GM12878 (cell line): ENCODE measurements at regions of chr11 and their contacts with region 1.

Region 1: DNA sequence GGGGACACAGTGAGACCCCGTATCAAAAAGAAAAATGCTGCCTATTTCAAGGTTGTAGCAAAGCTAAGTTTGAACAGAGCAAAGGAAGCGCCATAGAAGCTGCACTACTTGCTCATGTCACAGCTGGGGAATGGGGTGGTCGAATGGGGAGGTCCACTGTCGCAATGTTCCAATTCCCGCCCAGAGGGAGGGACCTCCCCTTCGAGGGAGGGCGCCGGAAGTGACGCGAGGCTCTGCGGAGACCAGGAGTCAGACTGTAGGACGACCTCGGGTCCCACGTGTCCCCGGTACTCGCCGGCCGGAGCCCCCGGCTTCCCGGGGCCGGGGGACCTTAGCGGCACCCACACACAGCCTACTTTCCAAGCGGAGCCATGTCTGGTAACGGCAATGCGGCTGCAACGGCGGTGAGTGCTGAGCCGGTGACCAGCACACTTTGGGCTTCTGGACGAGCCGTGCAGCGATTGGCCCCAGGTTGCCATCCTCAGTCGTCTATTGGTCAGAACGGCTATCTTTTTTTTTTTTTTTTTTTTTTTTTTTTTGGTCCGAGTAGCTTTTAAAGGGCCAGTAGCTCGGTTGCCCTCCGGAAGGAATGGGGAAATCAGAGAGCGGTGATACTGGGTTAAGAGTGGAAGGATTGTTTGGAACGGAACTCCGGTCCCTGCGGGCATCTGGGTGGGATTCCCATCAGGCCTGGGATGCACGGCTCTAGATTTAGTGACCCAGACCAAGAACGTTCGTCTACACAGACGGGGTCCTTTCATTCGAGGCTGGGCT is at the start of gene HMBS:
- DNase-seq: peak; percentile 79
- ATAC-seq: peak; percentile 95
- H3K4me3 ChIP-seq: peak within 1 kb of the TSS; percentile 97
- H3K27ac ChIP-seq: peak within 1 kb of the TSS; percentile 94
- H3K4me1 ChIP-seq: peaks cover 10% of the 10 kb centered on the region
- H3K27me3 ChIP-seq: no peaks in the 10 kb centered on the region
- CTCF ChIP-seq: no peak
- EP300 ChIP-seq: peak in 1 of 2 experiments; percentile 12; a peak in 1 of 4 replicates
- POLR2A ChIP-seq: peak; percentile 89
- RAD21 ChIP-seq: no peak
- polyA plus RNA-seq, gene HMBS: 17.7 to 27.6 TPM

Region 2: DNA sequence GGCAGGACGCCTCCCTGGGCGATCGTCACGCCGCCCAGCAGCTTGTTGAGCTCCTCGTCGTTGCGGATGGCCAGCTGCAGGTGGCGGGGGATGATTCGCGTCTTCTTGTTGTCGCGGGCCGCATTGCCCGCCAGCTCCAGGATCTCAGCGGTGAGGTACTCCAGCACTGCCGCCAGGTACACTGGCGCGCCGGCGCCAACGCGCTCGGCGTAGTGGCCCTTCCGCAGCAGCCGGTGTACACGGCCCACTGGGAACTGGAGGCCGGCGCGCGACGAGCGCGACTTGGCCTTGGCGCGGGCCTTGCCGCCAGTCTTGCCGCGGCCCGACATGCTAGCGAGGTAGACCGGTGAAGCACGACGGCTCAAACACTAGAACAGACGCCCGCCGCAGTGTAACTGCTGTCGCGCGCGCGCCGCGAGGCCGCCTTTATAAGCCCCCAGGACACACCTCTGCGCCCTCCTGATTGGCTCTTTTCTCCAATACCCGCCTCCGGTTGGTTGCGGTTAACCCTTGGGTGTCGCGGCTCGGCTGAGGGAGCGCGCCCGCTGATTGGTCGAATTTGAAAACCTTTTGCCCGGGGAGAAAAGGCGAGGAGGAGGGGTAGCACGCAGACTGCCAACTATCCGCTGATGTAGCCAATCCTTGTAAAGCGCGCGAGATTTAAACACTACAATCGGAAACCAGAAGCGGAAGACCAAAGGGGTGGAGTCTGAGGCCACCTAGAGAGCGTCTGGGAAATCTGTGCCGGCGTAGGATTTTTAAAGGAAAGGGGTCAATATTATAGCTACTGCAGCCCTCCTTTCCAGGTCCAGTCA is 10.4 kb after region 1 on chr11:
- CTCF ChIA-PET with region 1: interaction called, 11 read pairs
- POLR2A ChIA-PET with region 1: interaction called, 69 read pairs
- RAD21 ChIA-PET with region 1: interaction called, 5 read pairs
- SMC1A ChIA-PET with region 1: interaction called, 3 read pairs
- in situ Hi-C with region 1: no loop called
- intact Hi-C with region 1: no loop called
- DNase-seq: peak; percentile 99
- ATAC-seq: peak; percentile 89
- H3K4me3 ChIP-seq: peak overlapping the region; percentile 83
- H3K27ac ChIP-seq: peak overlapping the region; percentile 60
- H3K4me1 ChIP-seq: peaks cover 25% of the 10 kb centered on the region
- H3K27me3 ChIP-seq: no peaks in the 10 kb centered on the region
- CTCF ChIP-seq: peak in 1 of 3 experiments; percentile 37; a peak in 1 of 6 replicates
- EP300 ChIP-seq: 0 out of 4 replicates have a peak, but pooled peaks of 1 of the 2 experiments have one; percentile 8
- POLR2A ChIP-seq: peak; percentile 100
- RAD21 ChIP-seq: no peak